Motor neuron (in vitro differentiated cells): ENCODE measurements at regions of chr6 and their contacts with region 1.

Region 1: GRCh38 chr6:24283043-24283985 is 74.5 kb downstream of the DCDC2 start:
- ATAC-seq: peak; percentile 99 to 100 (median 99)
- H3K4me3 ChIP-seq: peak overlapping the region; percentile 10 to 30 (median 18)
- H3K27ac ChIP-seq: no peak overlapping the region
- H3K4me1 ChIP-seq: peaks cover 4 to 7% of the 10 kb centered on the region in 2 donors

Region 2: DNA sequence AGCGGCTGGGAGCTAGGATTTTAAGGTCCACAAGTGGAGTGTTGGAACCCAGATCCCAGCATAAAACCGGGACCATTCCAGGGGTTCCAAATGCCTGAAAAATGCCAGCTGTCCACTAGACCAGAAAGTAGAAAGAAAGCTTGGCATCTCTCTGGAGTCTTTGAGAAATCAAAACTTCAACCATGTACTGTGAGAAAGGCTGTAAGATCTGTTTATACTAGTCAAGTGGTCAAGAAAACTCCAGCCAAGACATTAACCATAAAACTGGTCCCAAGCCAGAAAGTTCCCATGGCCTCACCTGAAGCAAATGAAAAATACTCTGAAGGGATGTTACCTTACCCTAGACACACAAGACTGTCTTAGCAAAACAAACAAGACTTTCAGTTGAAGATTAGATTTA is 38.0 kb before region 1 on chr6:
- in situ Hi-C with region 1: no loop called
- ATAC-seq: no peak
- H3K4me3 ChIP-seq: no peak overlapping the region
- H3K27ac ChIP-seq: no peak overlapping the region
- H3K4me1 ChIP-seq: peaks cover 5 to 15% of the 10 kb centered on the region in 2 donors

Region 3: GRCh38 chr6:24385536-24386269 is 102.4 kb after region 1 on chr6:
- in situ Hi-C with region 1: loop called in 3 of 9 experiments (anchors 10 to 25 kb)
- ATAC-seq: no peak
- H3K4me3 ChIP-seq: no peak overlapping the region
- H3K27ac ChIP-seq: no peak overlapping the region
- H3K4me1 ChIP-seq: no peaks in the 10 kb centered on the region

Region 4: GRCh38 chr6:24394780-24395437 is 111.6 kb after region 1 on chr6:
- in situ Hi-C with region 1: loop called in 2 of 9 experiments (anchors 25 kb)
- ATAC-seq: peak in 2 of 8 experiments; percentile 99
- H3K4me3 ChIP-seq: no peak overlapping the region
- H3K27ac ChIP-seq: no peak overlapping the region
- H3K4me1 ChIP-seq: no peaks in the 10 kb centered on the region

Region 5: GRCh38 chr6:24415753-24416152 is 132.4 kb after region 1 on chr6:
- in situ Hi-C with region 1: no loop called
- ATAC-seq: no peak
- H3K4me3 ChIP-seq: no peak overlapping the region
- H3K27ac ChIP-seq: no peak overlapping the region
- H3K4me1 ChIP-seq: no peaks in the 10 kb centered on the region